ENCODE measurements at regions of chr18 and their contacts with region 1.

Region 1: GRCh38 chr18:77067291-77068061 is 65.1 kb downstream of the MBP start:
- DNase-seq: peak; percentile 64
- H3K4me3 ChIP-seq: no peak overlapping the region
- H3K27ac ChIP-seq: peak overlapping the region; percentile 78
- H3K27me3 ChIP-seq: no peaks in the 10 kb centered on the region
- CTCF ChIP-seq: 0 out of 2 replicates have a peak, but pooled peaks have one; percentile 17

Region 2: GRCh38 chr18:77032181-77032701 is 35.2 kb before region 1 on chr18:
- CTCF ChIA-PET with region 1: no interaction called
- POLR2A ChIA-PET with region 1: no interaction called
- DNase-seq: no peak
- H3K4me3 ChIP-seq: no peak overlapping the region
- H3K27ac ChIP-seq: peak overlapping the region; percentile 21
- H3K27me3 ChIP-seq: no peaks in the 10 kb centered on the region
- CTCF ChIP-seq: no peak

Region 3: DNA sequence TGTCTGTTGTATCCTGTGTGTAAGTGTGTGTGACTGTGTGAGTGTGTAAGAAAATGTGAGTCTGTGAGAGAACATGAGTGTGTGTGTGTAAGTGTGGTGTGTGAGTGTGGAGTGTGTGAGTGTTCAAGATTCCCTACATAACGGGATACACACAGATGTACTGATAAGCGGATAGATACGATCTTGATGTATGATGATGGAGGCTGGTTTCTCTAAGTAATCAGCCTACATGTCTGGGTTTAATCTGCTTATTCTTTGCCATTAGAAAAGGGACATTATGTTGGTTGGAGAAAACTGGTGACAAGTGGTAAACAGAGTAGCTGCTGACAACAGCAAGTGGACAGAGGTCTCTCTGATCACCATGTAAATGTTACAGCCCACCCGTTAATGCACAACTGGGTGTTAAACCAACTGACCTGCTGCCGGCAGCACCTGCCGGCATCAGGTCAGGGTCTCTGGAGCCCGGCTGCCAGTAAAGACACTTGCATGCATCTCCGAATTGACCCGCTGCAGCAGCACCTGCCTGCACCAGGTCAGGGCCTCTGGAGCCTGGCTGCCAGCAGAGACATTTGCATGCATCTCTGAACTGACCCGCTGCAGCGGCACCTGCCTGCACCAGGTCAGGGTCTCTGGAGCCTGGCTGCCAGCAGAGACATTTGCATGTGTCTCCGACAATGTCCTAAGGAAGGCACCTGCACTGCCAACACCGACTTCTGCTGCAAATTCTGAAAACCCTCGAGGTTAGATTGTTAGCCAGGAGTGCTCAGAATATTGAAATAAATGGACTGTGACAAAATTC is 22.4 kb before region 1 on chr18:
- CTCF ChIA-PET with region 1: no interaction called
- POLR2A ChIA-PET with region 1: no interaction called
- DNase-seq: no peak
- H3K4me3 ChIP-seq: no peak overlapping the region
- H3K27ac ChIP-seq: no peak overlapping the region
- H3K27me3 ChIP-seq: no peaks in the 10 kb centered on the region
- CTCF ChIP-seq: no peak

Region 4: GRCh38 chr18:77101410-77102258 is 34.2 kb after region 1 on chr18:
- CTCF ChIA-PET with region 1: no interaction called
- POLR2A ChIA-PET with region 1: interaction called, 17 read pairs
- DNase-seq: peak; percentile 89
- H3K4me3 ChIP-seq: peak overlapping the region; percentile 44
- H3K27ac ChIP-seq: peak overlapping the region; percentile 99
- H3K27me3 ChIP-seq: no peaks in the 10 kb centered on the region
- CTCF ChIP-seq: no peak

Region 5: DNA sequence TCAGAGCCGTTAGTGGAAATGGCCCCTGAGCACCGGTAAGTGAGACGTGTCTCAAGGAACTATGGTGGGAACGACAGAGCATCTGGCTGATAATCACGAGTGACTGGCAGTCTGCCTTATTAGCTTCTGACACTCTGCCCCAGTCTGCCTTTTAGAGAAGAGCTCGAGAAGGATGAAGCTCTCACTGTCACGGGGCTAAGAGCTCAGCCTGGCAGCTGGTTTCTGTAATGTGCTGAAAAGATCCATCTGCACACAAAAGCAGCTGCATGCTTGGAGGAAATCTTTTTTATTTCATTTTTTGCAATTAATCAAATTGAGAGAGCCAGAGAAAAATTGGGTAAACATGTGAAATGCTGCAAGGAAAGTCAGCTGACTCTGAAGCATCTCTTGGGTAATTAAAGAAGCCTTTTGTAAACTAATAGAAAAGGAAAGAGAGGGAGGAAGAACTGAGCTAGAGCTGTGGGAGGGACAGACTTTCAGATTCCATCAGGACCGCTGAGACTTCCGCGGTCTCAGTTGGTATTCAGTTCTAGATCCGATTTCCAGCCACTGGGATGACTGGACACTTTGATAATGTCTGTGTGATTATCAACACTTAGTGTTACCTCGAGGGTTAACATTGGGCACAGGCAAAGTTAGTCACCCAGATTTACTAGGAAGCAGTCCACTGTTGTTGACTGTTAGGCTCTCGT is 40.7 kb after region 1 on chr18:
- CTCF ChIA-PET with region 1: interaction called, 3 read pairs
- POLR2A ChIA-PET with region 1: interaction called, 14 read pairs
- DNase-seq: peak; percentile 79
- H3K4me3 ChIP-seq: peak overlapping the region; percentile 25
- H3K27ac ChIP-seq: peak overlapping the region; percentile 81
- H3K27me3 ChIP-seq: no peaks in the 10 kb centered on the region
- CTCF ChIP-seq: no peak

Region 6: GRCh38 chr18:77320971-77321559 is 253.6 kb after region 1 on chr18:
- CTCF ChIA-PET with region 1: no interaction called
- POLR2A ChIA-PET with region 1: no interaction called
- DNase-seq: no peak
- H3K4me3 ChIP-seq: no peak overlapping the region
- H3K27ac ChIP-seq: no peak overlapping the region
- H3K27me3 ChIP-seq: no peaks in the 10 kb centered on the region
- CTCF ChIP-seq: no peak